Adrenal gland (tissue), 19 donors: ENCODE measurements at regions of chr2 and their contacts with region 1.

Region 1: GRCh38 chr2:108719149-108720044 is at the start of gene RANBP2:
- DNase-seq: peak; percentile 95 to 98 (median 97)
- H3K4me3 ChIP-seq: peak within 1 kb of the TSS; percentile 26 to 98 (median 70)
- H3K27ac ChIP-seq: peak within 1 kb of the TSS; percentile 34 to 99 (median 97)
- H3K4me1 ChIP-seq: peaks cover 0 to 17% of the 10 kb centered on the region in 2 donors
- H3K27me3 ChIP-seq: no peaks in the 10 kb centered on the region
- CTCF ChIP-seq: no peak
- POLR2A ChIP-seq: peak; percentile 95 to 98
- total RNA-seq, gene RANBP2: 38.8 to 85.3 (median 69.9) TPM

Region 2: GRCh38 chr2:108575132-108575966 is 144.0 kb before region 1 on chr2:
- intact Hi-C with region 1: no loop called
- DNase-seq: peak in 1 of 7 donors; percentile 28
- H3K4me3 ChIP-seq: no peak overlapping the region
- H3K27ac ChIP-seq: peak overlapping the region in 4 of 5 donors; percentile 12 to 75 (median 48)
- H3K4me1 ChIP-seq: peaks cover 25 to 74% of the 10 kb centered on the region in 2 donors
- H3K27me3 ChIP-seq: no peaks in the 10 kb centered on the region
- CTCF ChIP-seq: no peak
- POLR2A ChIP-seq: no peak

Region 3: DNA sequence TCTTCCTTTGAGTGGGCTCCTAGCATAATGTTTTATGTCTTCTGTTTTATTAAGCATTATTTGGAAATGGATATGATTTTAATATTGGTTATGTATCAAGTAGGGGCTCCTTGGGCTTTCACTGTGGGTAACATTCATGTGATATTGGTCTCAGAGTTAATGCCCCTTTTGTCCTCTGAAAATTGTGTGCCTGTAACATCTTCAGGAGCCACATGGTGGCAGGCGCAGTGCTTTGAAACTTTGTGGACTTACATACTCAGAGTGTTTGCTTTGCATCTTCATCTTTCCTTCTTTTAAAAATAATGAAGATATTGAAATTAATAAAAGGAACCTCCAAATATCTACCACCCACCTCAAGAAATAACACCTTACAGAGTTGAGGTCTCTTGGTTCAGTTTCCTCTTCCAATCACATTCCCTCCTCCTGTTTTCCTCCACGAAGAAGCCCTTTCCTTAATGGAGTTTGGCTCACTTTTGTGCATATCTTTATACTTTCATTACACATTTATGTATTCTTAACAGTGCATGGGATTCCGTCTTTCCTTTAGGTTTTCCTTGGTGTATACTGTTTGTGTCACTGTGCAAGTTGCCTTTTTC is 111.6 kb before region 1 on chr2:
- intact Hi-C with region 1: loop called in 1 of 2 experiments (anchors 10 kb)
- DNase-seq: peak in 4 of 7 donors; percentile 51 to 79 (median 61)
- H3K4me3 ChIP-seq: no peak overlapping the region
- H3K27ac ChIP-seq: no peak overlapping the region
- H3K4me1 ChIP-seq: peaks cover 0 to 2% of the 10 kb centered on the region in 2 donors
- H3K27me3 ChIP-seq: no peaks in the 10 kb centered on the region
- CTCF ChIP-seq: peak; percentile 32 to 80 (median 68)
- POLR2A ChIP-seq: no peak